BJ (cell line): ENCODE measurements at regions of chr16 and their contacts with region 1.

Region 1: DNA sequence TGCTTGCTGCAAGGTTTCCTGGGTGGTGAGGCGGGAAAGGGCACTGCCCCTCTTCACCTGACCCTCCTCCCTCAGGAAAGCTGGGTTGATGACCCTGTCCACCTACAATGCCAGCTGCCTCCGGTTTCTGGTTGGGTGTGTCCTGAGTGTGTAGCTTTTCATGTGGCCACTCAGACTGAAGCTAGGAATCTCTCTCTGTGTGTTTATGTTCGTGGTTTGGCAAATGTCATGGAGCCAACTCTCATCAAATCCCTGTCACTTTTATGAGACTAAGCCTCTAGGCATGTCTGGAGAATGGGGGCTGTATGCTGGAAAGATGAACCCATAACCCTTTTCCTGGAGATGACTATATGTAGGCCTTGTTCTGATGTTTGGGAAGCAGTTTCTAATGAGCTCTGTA is 17.1 kb downstream of the PLEKHG4 start:
- DNase-seq: peak; percentile 62
- H3K4me3 ChIP-seq: no peak overlapping the region
- H3K27me3 ChIP-seq: no peaks in the 10 kb centered on the region
- CTCF ChIP-seq: no peak

Region 2: GRCh38 chr16:67279296-67280089 is 16.9 kb before region 1 on chr16 and contains the start of gene PLEKHG4:
- CTCF ChIA-PET with region 1: interaction called, 39 read pairs
- POLR2A ChIA-PET with region 1: no interaction called
- DNase-seq: no peak
- H3K4me3 ChIP-seq: peak within 1 kb of the TSS; percentile 53
- H3K27me3 ChIP-seq: no peaks in the 10 kb centered on the region
- CTCF ChIP-seq: peak; percentile 36
- polyA plus RNA-seq, gene PLEKHG4: 12.1 and 25.2 TPM in 2 replicates

Region 3: DNA sequence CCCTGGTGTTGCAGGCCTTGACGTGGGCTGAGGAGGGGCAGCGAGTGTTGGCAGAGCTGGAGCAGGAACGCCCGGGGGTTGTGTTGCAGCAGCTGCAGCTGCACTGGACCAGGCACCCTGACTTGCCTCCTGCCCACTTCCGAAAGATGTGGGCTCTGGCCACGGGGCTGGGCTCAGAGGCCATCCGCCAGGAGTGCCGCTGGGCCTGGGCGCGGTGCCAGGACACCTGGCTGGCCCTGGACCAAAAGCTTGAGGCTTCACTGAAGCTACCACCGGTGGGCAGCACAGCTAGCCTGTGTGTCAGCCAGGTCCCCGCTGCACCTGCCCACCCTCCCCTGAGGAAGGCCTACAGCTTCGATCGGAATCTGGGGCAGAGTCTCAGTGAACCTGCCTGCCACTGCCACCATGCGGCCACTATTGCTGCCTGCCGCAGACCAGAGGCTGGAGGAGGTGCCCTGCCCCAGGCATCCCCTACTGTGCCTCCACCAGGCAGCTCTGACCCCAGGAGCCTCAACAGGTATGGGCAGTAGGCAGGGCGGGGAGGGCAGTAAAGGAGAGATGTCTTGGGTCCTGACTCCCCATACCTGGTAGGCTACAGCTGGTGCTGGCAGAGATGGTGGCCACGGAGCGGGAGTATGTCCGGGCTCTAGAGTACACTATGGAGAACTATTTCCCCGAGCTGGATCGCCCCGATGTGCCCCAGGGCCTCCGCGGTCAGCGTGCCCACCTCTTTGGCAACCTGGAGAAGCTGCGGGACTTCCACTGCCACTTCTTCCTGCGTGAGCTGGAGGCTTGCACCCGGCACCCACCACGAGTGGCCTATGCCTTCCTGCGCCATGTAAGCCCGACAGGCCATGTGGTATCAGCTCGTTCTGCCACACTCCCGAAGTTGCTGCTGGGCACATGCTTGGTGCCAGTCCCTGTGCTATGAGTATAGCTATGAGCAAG is 11.4 kb before region 1 on chr16:
- CTCF ChIA-PET with region 1: interaction called, 39 read pairs
- POLR2A ChIA-PET with region 1: no interaction called
- DNase-seq: no peak
- H3K4me3 ChIP-seq: no peak overlapping the region
- H3K27me3 ChIP-seq: no peaks in the 10 kb centered on the region
- CTCF ChIP-seq: peak; percentile 55